Dorsolateral prefrontal cortex (tissue), 120 donors: ENCODE measurements at regions of chr4 and their contacts with region 1.

Region 1: DNA sequence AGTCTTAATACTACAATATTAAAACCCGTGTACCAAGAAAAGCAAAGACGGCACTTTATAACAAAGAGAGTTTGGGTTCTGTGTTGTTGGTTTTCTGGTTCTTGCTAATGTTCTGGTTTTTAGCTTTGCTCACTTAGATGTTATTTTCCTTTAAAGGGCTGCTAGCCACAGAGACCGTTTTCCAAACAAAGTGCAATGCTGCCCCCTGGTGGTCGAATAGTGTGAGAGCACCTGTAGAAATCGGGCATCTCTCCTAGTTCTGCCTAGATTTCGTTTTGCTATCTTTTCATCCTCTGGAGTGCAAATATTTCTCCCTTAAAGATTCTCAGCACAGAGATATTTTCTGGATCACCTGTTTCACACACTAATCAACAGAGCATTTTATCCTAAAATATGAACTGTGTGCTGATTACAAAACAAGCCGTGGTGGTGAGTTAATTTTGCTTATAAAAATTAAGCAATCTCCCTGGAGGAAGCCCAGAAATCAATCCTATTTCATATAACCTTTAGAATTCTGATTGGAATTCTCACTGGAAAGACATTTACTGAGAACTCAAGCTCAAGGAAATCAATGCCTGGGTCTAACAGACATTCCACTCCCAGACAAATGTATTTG is 334.5 kb upstream of the NOCT start:
- DNase-seq: peak; percentile 76 to 92 (median 85)
- H3K4me3 ChIP-seq: peak overlapping the region in 17 of 59 donors; percentile 2 to 48 (median 22)
- H3K27ac ChIP-seq: peak overlapping the region in 3 of 59 donors; percentile 5 to 22 (median 19)
- H3K27me3 ChIP-seq: no peaks in the 10 kb centered on the region
- CTCF ChIP-seq: peak; percentile 94 to 100 (median 98)

Region 2: DNA sequence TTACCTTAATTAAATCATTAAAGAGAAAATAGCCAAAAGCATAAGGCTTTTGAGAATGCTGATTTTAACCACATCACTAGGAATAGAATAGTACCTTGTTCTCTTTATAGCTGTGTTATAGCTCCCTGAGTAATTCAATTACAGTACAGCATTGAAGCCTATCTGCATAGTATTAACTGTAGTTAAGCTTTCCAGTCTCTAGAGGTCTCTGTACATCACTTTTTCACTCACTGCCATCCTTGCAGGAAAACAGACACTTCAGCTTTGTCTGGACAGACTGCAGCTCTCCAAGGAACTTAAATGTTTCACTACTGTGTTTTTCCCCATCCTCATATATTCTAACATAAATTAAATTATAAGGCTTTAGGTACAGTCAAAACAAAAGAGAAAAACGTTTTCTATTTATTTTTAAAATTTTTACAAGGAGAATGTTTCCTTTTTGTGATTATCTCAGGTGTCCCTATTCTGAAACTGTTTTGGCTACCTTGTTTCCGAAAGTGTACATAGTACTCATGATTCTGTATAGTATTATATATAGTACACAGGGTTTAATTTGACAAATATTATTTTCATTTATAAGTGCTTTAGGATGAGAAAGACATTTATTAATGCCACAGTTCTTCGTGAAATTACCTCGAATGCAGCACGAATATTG is 1556.7 kb before region 1 on chr4:
- intact Hi-C with region 1: loop called in 1 of 2 experiments (anchors 10 kb)
- DNase-seq: no peak
- H3K4me3 ChIP-seq: peak overlapping the region; percentile 15 to 67 (median 46)
- H3K27ac ChIP-seq: peak overlapping the region in 1 of 59 donors; percentile 11
- H3K27me3 ChIP-seq: no peaks in the 10 kb centered on the region
- CTCF ChIP-seq: peak in 55 of 56 donors; percentile 22 to 89 (median 74)

Region 3: DNA sequence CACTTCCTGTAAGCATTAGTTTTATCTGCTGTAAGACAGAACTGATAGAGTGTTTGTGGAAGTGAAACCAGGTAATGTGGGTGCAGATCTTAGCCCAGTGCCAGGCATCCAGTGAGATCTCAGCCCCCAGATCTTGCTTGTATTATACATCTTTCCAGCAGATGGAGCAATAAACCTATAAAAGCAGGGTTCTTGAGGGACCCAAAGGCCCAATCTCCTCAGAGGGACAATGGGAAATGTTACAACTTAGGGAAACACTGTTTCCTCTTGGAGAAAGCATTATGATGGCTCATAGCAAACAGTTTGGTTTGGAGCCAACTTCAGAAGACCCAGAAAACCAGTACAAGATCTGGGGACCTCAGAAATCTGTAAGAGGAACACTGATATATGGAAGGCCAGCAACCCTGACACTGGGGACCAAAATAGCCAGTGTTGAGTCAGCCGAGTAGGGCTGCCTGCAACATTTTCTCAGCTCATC is 645.3 kb before region 1 on chr4:
- intact Hi-C with region 1: loop called (anchors 5 kb)
- DNase-seq: peak in 1 of 10 donors; percentile 25
- H3K4me3 ChIP-seq: no peak overlapping the region
- H3K27ac ChIP-seq: no peak overlapping the region
- H3K27me3 ChIP-seq: no peaks in the 10 kb centered on the region
- CTCF ChIP-seq: peak; percentile 28 to 89 (median 73)

Region 4: DNA sequence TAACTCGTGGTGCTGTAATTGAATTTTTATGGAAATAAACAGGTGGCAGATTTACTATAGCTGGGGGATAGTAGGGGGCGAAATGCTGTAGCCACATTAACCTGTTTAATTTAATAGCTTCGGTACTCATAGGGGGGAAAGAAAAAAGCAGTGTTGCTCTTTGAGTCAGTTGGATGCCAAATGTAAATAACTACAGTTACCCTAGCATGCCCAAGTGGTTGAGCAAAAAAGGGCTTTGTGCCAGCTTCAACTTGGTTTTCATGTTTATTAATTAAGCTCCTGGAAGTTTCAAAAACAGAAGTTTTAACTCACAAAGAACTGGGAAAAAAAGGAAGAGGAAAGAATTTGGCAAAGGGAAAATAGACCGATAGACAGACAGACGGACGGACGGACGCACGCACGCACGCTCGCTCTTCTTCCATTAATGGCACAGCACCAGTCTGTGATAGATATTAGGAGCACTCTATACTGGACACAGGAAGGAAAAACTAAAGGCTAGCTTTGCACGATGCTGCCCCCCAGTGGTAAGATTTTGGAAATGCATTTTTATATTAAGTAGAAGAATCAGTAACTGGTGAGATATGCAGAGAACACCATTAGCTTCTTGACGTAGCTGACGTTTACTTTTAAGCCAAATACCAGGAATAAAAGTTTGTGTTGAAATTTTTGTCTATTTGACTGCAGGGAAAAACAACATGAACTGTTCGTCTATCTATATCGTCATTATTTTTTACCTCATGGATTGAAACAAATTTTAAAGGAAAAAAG is 590.8 kb before region 1 on chr4:
- intact Hi-C with region 1: no loop called
- DNase-seq: peak in 5 of 10 donors; percentile 16 to 42 (median 38)
- H3K4me3 ChIP-seq: peak overlapping the region in 42 of 59 donors; percentile 4 to 55 (median 36)
- H3K27ac ChIP-seq: no peak overlapping the region
- H3K27me3 ChIP-seq: no peaks in the 10 kb centered on the region
- CTCF ChIP-seq: peak; percentile 72 to 97 (median 86)

Region 5: GRCh38 chr4:138182838-138183426 is 498.2 kb before region 1 on chr4:
- intact Hi-C with region 1: loop called (anchors 5 to 10 kb)
- DNase-seq: no peak
- H3K4me3 ChIP-seq: peak overlapping the region in 28 of 59 donors; percentile 0 to 55 (median 21)
- H3K27ac ChIP-seq: peak overlapping the region in 48 of 59 donors; percentile 0 to 90 (median 57)
- H3K27me3 ChIP-seq: no peaks in the 10 kb centered on the region
- CTCF ChIP-seq: peak; percentile 36 to 88 (median 70)

Region 6: GRCh38 chr4:138835832-138836533 is 154.9 kb after region 1 on chr4:
- intact Hi-C with region 1: no loop called
- DNase-seq: no peak
- H3K4me3 ChIP-seq: no peak overlapping the region
- H3K27ac ChIP-seq: no peak overlapping the region
- H3K27me3 ChIP-seq: peaks cover 0 to 4% (median 0%) of the 10 kb centered on the region in 45 donors
- CTCF ChIP-seq: peak in 1 of 56 donors; percentile 13

Region 7: GRCh38 chr4:138870737-138871554 is 189.8 kb after region 1 on chr4:
- intact Hi-C with region 1: loop called (anchors 5 to 10 kb)
- DNase-seq: peak in 9 of 10 donors; percentile 42 to 82 (median 62)
- H3K4me3 ChIP-seq: peak overlapping the region in 5 of 59 donors; percentile 15 to 25 (median 22)
- H3K27ac ChIP-seq: peak overlapping the region in 12 of 59 donors; percentile 14 to 72 (median 45)
- H3K27me3 ChIP-seq: no peaks in the 10 kb centered on the region
- CTCF ChIP-seq: peak; percentile 80 to 98 (median 92)

Region 8: GRCh38 chr4:138919094-138919936 is 238.2 kb after region 1 on chr4:
- intact Hi-C with region 1: loop called in 1 of 2 experiments (anchors 5 kb)
- DNase-seq: peak; percentile 63 to 87 (median 82)
- H3K4me3 ChIP-seq: peak overlapping the region in 55 of 59 donors; percentile 0 to 57 (median 35)
- H3K27ac ChIP-seq: peak overlapping the region in 14 of 59 donors; percentile 2 to 68 (median 37)
- H3K27me3 ChIP-seq: no peaks in the 10 kb centered on the region
- CTCF ChIP-seq: peak; percentile 25 to 95 (median 78)

Region 9: DNA sequence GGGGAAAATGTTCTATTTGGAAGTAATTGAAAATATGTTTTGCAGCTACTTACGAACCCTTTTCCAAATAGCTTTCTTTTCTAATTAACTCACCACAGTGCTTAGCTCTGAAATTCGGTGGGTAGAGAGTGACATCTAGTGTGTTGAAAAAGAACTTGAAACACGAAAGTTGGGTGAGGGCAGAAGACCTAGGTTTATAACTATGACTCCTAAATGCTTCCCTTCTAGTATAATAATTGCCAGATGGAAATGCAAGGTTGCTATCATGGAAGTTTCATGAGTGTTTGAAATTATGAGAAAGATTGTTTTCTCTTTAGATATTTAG is 257.2 kb after region 1 on chr4:
- intact Hi-C with region 1: loop called in 1 of 2 experiments (anchors 5 kb)
- DNase-seq: no peak
- H3K4me3 ChIP-seq: peak overlapping the region in 25 of 59 donors; percentile 5 to 47 (median 28)
- H3K27ac ChIP-seq: no peak overlapping the region
- H3K27me3 ChIP-seq: no peaks in the 10 kb centered on the region
- CTCF ChIP-seq: peak in 55 of 56 donors; percentile 26 to 80 (median 59)